ENCODE measurements at regions of chr5 and their contacts with region 1.

Region 1: DNA sequence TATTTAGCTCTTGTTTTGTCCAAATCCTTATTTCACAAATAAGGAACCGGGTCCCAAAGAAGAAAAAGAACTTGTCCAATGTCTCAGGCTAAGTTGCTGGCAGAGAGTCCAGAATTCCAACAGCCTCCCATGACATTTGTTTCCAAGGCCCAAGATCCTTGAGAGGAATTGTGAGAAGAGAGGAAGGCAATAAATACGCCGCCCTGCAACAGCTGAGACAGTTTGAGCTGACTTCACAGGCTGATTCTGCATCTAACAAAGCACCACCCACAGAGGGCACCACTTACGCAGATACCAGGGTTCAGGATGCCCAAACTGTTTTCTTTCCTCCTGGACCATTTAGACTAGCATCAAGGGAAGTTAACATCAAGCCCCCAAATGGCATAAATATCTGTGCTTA is 211.3 kb downstream of the FAM114A2 start:
- DNase-seq: peak in 2 of 10 donors; percentile 8 to 12

Region 2: GRCh38 chr5:153896701-153897100 is 69.3 kb after region 1 on chr5:
- intact Hi-C with region 1: no loop called
- DNase-seq: no peak

Region 3: DNA sequence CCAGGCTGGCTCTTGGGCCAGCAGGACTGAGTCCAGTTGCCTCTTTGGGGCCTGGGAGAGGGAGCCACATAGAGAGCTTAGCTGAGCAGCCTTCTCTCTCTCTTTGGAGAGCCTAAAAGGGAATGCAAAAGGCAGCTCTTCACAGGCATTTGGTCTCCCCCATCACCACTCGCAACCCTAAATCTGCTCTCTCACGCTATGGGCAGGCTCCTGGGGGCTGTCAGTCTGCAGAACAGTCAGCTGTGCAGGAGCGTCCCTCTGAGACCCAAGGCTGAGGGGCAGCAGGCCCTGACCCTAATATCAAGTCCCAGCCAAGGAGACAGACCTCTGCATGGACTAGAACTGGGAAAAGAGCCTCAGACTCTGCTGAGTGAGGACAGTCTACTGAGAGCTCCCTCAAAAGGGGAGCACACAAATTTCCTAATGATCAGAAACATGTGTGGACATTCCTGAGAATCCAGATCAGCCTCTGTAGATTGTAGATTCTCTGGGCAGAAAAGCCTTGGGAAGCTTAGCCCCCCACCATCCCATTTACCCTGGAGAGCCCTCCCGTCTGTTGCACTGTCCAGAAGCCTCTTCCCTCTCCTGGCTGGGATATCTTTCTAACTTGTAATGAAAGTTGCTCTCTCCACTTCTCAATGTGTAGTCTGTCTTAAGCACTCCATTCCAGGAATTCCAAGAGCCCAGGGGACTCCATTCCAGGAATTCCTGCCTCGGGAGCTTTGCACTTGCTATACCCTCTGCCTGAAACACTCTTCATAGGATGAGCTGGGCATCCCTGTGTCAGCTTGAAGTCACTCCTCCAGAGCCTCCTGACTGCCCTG is 131.9 kb after region 1 on chr5:
- intact Hi-C with region 1: loop called (anchors 10 kb)
- DNase-seq: peak in 1 of 10 donors; percentile 55